H1 (cell line): ENCODE measurements at regions of chr4 and their contacts with region 1.

Region 1: DNA sequence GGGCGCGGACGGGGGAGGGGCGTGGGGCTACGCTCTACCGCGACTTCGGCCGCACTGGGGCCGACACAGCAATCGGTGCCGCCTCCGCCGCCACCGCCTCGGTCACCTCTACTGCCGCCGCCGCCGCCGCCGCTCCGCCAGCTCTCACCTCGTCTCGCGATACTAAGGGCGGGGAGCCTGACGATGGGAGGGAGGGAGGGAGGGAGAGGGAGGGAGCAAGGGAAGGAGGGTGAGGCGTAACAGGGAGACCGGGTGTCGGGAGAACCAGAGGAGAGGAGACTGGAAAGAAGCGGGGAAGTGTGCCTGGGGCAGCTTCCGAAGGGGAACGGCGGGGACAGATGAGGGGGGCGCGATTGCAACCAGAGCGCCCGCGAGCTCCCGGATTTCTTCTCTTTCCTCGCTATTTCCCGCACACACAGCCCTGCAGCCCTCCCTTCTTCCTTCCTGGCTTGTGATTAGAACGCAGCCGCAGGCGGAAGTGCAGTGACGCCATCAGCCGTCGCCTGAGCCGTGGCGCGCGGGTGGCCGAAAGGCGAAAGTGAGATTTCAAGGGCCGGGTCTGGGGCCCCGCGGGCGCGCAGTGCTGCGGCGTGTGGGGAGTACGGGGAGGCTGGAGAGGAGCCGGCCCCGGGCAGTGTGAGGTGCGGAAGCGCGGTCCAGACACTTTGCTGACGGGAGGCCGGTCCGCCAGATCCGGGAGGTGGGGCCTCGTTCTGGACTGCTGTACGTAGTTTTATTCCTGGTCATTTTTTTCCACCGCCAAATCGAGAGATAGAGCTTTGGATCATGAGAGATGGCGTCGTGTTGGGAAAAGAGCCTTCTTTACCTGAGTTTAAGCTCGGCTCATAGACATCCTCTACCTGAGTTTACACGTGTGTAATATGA is at the start of gene ANKRD17:
- DNase-seq: peak; percentile 62 to 96
- H3K4me3 ChIP-seq: peak within 1 kb of the TSS; percentile 86 to 100 (median 94)
- H3K27ac ChIP-seq: peak within 1 kb of the TSS; percentile 99
- H3K4me1 ChIP-seq: peaks cover 0 to 5% (median 0%) of the 10 kb centered on the region in 4 experiments; a peak in 2 of 7 replicates
- H3K27me3 ChIP-seq: no peaks in the 10 kb centered on the region
- CTCF ChIP-seq: 0 out of 4 replicates have a peak, but pooled peaks of 1 of the 3 experiments have one; percentile 10
- EP300 ChIP-seq: 0 out of 3 replicates have a peak, but pooled peaks of 1 of the 2 experiments have one; percentile 33
- POLR2A ChIP-seq: peak; percentile 89 to 98
- RAD21 ChIP-seq: no peak
- total RNA-seq, gene ANKRD17: 87.1 and 93.7 TPM in 2 replicates

Region 2: DNA sequence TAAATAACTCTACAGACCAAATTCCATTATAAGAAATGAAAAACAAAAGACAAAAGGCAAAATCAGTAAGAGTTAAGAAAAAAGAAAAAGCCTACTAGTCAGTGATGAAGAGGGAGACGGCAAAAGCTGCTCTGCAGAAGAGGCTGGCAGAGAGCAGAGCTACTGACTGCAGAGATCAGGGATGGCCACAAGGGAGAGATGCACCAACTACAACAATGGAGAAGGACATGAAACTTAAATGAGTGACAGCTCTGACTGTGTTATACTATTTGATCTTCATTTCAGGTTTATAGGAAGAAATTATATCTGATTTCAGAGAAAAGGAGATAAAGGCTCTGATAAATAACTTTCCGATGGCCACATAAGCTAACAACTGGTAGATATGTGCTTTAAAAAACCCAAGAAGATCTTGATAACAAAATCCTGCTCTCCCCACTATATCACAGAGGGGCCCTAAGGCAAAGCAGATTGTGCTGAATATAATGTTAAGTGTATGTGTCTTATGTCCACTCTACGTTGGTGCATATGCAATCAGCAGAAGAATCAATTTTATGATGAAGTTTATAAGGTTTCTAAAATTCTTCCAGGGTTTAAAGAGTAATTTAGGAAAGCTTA is 131.0 kb before region 1 on chr4:
- CTCF ChIA-PET with region 1: interaction called, 10 read pairs
- POLR2A ChIA-PET with region 1: interaction called, 3 read pairs
- DNase-seq: no peak
- H3K4me3 ChIP-seq: no peak overlapping the region
- H3K27ac ChIP-seq: no peak overlapping the region
- H3K4me1 ChIP-seq: no peaks in the 10 kb centered on the region
- H3K27me3 ChIP-seq: no peaks in the 10 kb centered on the region
- CTCF ChIP-seq: peak; percentile 3 to 51 (median 40); a peak in 3 of 4 replicates
- EP300 ChIP-seq: no peak
- POLR2A ChIP-seq: no peak
- RAD21 ChIP-seq: peak in 1 of 2 experiments; percentile 20; a peak in 1 of 4 replicates

Region 3: GRCh38 chr4:73221734-73222133 is 37.2 kb before region 1 on chr4:
- CTCF ChIA-PET with region 1: no interaction called
- POLR2A ChIA-PET with region 1: interaction called, 10 read pairs
- DNase-seq: no peak
- H3K4me3 ChIP-seq: no peak overlapping the region
- H3K27ac ChIP-seq: no peak overlapping the region
- H3K4me1 ChIP-seq: peaks cover 4 to 12% (median 8%) of the 10 kb centered on the region in 4 experiments
- H3K27me3 ChIP-seq: peaks cover 0 to 1% (median 0%) of the 10 kb centered on the region in 4 experiments; a peak in 1 of 7 replicates
- CTCF ChIP-seq: no peak
- EP300 ChIP-seq: no peak
- POLR2A ChIP-seq: no peak
- RAD21 ChIP-seq: no peak

Region 4: GRCh38 chr4:73234712-73235111 is 24.2 kb before region 1 on chr4:
- CTCF ChIA-PET with region 1: interaction called, 6 read pairs
- POLR2A ChIA-PET with region 1: interaction called, 14 read pairs
- DNase-seq: no peak
- H3K4me3 ChIP-seq: no peak overlapping the region
- H3K27ac ChIP-seq: no peak overlapping the region
- H3K4me1 ChIP-seq: peaks cover 0 to 4% (median 0%) of the 10 kb centered on the region in 4 experiments; a peak in 1 of 7 replicates
- H3K27me3 ChIP-seq: no peaks in the 10 kb centered on the region
- CTCF ChIP-seq: no peak
- EP300 ChIP-seq: no peak
- POLR2A ChIP-seq: no peak
- RAD21 ChIP-seq: no peak

Region 5: GRCh38 chr4:73245955-73246354 is 13.0 kb before region 1 on chr4:
- CTCF ChIA-PET with region 1: interaction called, 6 read pairs
- POLR2A ChIA-PET with region 1: interaction called, 17 read pairs
- DNase-seq: no peak
- H3K4me3 ChIP-seq: no peak overlapping the region
- H3K27ac ChIP-seq: no peak overlapping the region
- H3K4me1 ChIP-seq: peaks cover 0 to 3% (median 0%) of the 10 kb centered on the region in 4 experiments; a peak in 2 of 7 replicates
- H3K27me3 ChIP-seq: no peaks in the 10 kb centered on the region
- CTCF ChIP-seq: no peak
- EP300 ChIP-seq: no peak
- POLR2A ChIP-seq: no peak
- RAD21 ChIP-seq: no peak

Region 6: GRCh38 chr4:73272816-73273215 is 13.9 kb after region 1 on chr4:
- CTCF ChIA-PET with region 1: interaction called, 5 read pairs
- POLR2A ChIA-PET with region 1: interaction called, 10 read pairs
- DNase-seq: no peak
- H3K4me3 ChIP-seq: no peak overlapping the region
- H3K27ac ChIP-seq: no peak overlapping the region
- H3K4me1 ChIP-seq: no peaks in the 10 kb centered on the region
- H3K27me3 ChIP-seq: no peaks in the 10 kb centered on the region
- CTCF ChIP-seq: no peak
- EP300 ChIP-seq: no peak
- POLR2A ChIP-seq: no peak
- RAD21 ChIP-seq: no peak